Posterior vena cava (tissue), 2 donors: ENCODE measurements at regions of chr4 and their contacts with region 1.

Region 1: GRCh38 chr4:16694173-16694883 is 204.1 kb downstream of the LDB2 start:
- DNase-seq: no peak

Region 2: GRCh38 chr4:16706251-16706650 is 11.9 kb after region 1 on chr4:
- intact Hi-C with region 1: loop called in 1 of 2 experiments (anchors 1 kb)
- DNase-seq: no peak

Region 3: GRCh38 chr4:16715482-16715881 is 21.2 kb after region 1 on chr4:
- intact Hi-C with region 1: loop called in 1 of 2 experiments (anchors 2 kb)
- DNase-seq: no peak